Common myeloid progenitor, CD34-positive (primary cell): ENCODE measurements at regions of chr1 and their contacts with region 1.

Region 1: GRCh38 chr1:220922951-220923350 is 43.7 kb downstream of the HLX start:
- DNase-seq: peak in 1 of 3 donors; percentile 22
- H3K4me3 ChIP-seq: no peak overlapping the region
- H3K27ac ChIP-seq: no peak overlapping the region
- H3K4me1 ChIP-seq: peaks cover 11 to 51% (median 34%) of the 10 kb centered on the region in 4 experiments
- H3K27me3 ChIP-seq: no peaks in the 10 kb centered on the region

Region 2: GRCh38 chr1:220908757-220909156 is 14.2 kb before region 1 on chr1:
- CTCF ChIA-PET with region 1: interaction called, 13 read pairs
- POLR2A ChIA-PET with region 1: no interaction called
- DNase-seq: peak in 2 of 3 donors; percentile 72 to 74
- H3K4me3 ChIP-seq: no peak overlapping the region
- H3K27ac ChIP-seq: no peak overlapping the region
- H3K4me1 ChIP-seq: peaks cover 0 to 19% (median 4%) of the 10 kb centered on the region in 4 experiments
- H3K27me3 ChIP-seq: peaks cover 0 to 4% (median 0%) of the 10 kb centered on the region in 5 experiments

Region 3: DNA sequence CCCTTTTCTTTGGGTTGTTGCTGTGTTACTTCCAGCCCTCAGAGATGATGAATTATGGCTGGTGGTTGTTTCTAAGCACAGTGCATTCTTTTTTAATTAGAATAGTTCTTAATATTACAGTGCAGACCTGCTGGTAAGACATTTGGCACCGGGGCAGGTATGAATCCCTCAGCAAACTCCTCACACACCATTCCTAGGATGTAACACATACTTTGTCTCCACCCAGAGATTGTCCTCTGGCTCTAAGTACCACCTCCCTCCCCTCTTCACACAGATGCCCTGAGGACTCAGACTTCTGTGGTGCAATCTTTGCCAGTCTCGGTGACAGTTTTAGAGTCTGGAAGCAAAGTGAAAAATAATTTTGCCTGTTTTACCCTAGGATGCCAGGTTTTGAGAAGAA is 99.4 kb after region 1 on chr1:
- CTCF ChIA-PET with region 1: no interaction called
- POLR2A ChIA-PET with region 1: no interaction called
- DNase-seq: no peak
- H3K4me3 ChIP-seq: no peak overlapping the region
- H3K27ac ChIP-seq: no peak overlapping the region
- H3K4me1 ChIP-seq: peaks cover 6 to 16% (median 7%) of the 10 kb centered on the region in 4 experiments
- H3K27me3 ChIP-seq: no peaks in the 10 kb centered on the region